Ascending aorta (tissue), 2 donors: ENCODE measurements at regions of chr19 and their contacts with region 1.

Region 1: GRCh38 chr19:29610563-29611271 is 4.6 kb downstream of the POP4 start:
- DNase-seq: peak in 1 of 2 donors; percentile 89
- H3K4me3 ChIP-seq: no peak overlapping the region
- H3K27ac ChIP-seq: no peak overlapping the region
- H3K4me1 ChIP-seq: peaks cover 0 to 3% of the 10 kb centered on the region in 2 donors
- H3K27me3 ChIP-seq: no peaks in the 10 kb centered on the region
- CTCF ChIP-seq: peak; percentile 78 to 86 (median 83)

Region 2: GRCh38 chr19:29665215-29665825 is 54.6 kb after region 1 on chr19 and contains the start of gene PLEKHF1:
- intact Hi-C with region 1: loop called (anchors 1 kb)
- DNase-seq: peak; percentile 72 to 95
- H3K4me3 ChIP-seq: peak within 1 kb of the TSS; percentile 75 to 93
- H3K27ac ChIP-seq: peak within 1 kb of the TSS; percentile 99
- H3K4me1 ChIP-seq: peaks cover 39 to 64% of the 10 kb centered on the region in 2 donors
- H3K27me3 ChIP-seq: no peaks in the 10 kb centered on the region
- CTCF ChIP-seq: no peak
- total RNA-seq, gene PLEKHF1: 68.3 TPM

Region 3: DNA sequence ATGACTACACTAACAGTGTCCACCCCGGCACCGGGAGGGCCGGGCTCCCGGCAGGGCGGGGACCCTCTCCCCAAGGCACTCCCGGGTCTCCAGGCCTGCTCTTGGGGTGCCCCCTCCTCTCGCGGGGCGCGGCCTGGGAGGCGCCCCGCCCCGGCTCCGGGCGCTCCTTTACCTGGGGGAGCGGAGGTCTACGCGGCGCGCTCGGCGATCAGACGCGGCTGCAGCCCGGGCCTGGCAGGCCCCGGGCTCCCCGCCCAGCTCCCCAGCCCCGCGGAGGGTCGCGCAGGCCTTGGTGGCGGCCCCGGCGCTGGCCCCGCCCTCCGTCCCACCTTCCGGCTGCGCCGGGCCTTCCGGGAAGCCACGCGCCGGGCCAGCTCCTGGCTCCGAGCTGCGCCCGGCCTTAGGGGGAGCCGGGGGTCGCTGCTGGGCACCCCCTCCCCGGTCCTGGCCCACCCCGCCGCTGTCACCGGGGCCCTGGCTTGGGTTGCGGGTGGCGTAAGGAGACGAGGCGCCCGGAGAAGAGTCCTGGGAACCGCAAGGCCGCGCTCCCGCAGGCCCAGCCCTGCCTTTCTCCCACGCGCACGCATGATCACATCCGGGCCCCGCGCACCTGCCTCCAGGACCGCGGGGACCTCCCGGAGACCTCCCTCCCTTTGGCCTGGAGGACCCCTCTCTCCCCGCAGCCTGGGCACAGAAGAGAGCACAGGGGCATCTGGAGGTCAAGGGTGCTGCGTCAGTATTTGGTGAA is 104.4 kb after region 1 on chr19 and contains the start of gene C19orf12:
- intact Hi-C with region 1: loop called (anchors 1 kb)
- DNase-seq: peak in 1 of 2 donors; percentile 70
- H3K4me3 ChIP-seq: peak within 1 kb of the TSS; percentile 91 to 97
- H3K27ac ChIP-seq: peak within 1 kb of the TSS; percentile 81 to 95
- H3K4me1 ChIP-seq: peaks cover 9 to 28% of the 10 kb centered on the region in 2 donors
- H3K27me3 ChIP-seq: no peaks in the 10 kb centered on the region
- CTCF ChIP-seq: no peak
- total RNA-seq, gene C19orf12: 37.8 TPM

Region 4: GRCh38 chr19:29753190-29753933 is 142.6 kb after region 1 on chr19:
- intact Hi-C with region 1: no loop called
- DNase-seq: no peak
- H3K4me3 ChIP-seq: no peak overlapping the region
- H3K27ac ChIP-seq: no peak overlapping the region
- H3K4me1 ChIP-seq: no peaks in the 10 kb centered on the region
- H3K27me3 ChIP-seq: no peaks in the 10 kb centered on the region
- CTCF ChIP-seq: no peak

Region 5: DNA sequence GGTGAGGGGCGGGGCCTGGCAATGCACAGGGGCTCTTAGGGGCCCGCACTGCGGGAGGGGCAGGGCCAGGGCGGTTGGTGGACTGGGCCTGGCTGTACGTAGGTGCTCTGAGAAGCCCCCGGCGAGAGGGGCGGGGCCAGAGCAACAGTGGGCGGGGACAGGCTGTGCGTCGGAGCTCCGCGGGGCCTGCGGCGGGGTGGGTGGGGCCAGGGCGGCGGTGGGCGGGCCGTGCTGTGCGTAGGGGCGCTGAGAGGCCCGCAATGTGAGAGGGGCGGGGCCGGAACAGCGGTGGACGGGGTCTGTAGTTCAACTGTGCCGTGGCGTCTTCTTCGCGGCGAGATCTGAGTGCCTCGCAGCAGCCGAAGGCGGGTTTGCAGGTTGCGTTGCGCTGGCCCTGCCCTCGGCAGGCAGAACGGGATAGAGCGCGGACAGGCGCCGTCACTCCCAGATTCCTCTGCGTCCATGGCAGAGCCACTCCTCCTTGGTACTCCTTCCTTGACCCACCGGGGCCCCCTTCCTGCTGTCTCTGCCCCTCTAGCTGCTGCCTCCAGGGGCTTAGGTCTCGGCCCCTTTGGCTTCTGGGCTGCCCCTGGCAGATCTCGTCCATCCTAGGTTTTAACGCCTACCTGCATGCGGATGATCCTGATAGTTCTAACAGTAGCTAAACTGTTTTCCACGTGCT is 234.3 kb after region 1 on chr19:
- intact Hi-C with region 1: loop called (anchors 1 kb)
- DNase-seq: peak; percentile 55 to 92
- H3K4me3 ChIP-seq: peak overlapping the region; percentile 66 to 88
- H3K27ac ChIP-seq: peak overlapping the region; percentile 27 to 74
- H3K4me1 ChIP-seq: peaks cover 5 to 9% of the 10 kb centered on the region in 2 donors
- H3K27me3 ChIP-seq: no peaks in the 10 kb centered on the region
- CTCF ChIP-seq: no peak

Region 6: DNA sequence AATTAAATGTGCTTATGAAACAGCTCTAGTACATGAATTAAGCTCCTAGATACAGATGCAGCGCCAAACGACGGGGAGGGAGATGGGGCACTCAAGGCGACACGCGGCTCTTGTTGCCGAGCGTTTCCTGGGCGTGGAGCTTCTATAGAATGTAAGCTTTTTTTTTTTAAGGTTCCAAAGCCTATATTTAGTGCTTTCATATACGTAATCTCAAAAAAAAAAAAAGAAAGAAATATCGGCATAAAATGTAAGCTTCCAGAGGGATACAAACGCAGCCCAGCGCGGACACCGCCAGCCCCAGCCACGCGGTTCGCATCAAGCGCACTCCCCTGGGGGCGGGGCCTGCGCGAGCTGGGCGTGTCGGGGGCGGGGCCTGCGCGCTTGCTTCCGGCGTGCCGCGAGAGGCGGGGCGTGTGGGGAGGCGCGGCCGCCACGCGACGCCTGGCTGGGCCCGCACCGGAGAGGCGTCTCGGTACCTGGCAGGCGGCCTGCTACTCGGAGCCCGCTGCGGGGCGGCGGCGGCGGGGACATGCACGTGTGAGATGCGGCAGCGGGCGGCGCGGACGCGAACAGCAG is 331.2 kb after region 1 on chr19 and contains the start of gene URI1:
- intact Hi-C with region 1: loop called (anchors 5 kb)
- DNase-seq: peak; percentile 28 to 93
- H3K4me3 ChIP-seq: peak within 1 kb of the TSS; percentile 98 to 99
- H3K27ac ChIP-seq: peak within 1 kb of the TSS; percentile 77 to 78
- H3K4me1 ChIP-seq: peaks cover 0 to 18% of the 10 kb centered on the region in 2 donors
- H3K27me3 ChIP-seq: no peaks in the 10 kb centered on the region
- CTCF ChIP-seq: no peak
- total RNA-seq, gene URI1: 23.8 TPM